ENCODE measurements at regions of chr9 and their contacts with region 1.

Region 1: DNA sequence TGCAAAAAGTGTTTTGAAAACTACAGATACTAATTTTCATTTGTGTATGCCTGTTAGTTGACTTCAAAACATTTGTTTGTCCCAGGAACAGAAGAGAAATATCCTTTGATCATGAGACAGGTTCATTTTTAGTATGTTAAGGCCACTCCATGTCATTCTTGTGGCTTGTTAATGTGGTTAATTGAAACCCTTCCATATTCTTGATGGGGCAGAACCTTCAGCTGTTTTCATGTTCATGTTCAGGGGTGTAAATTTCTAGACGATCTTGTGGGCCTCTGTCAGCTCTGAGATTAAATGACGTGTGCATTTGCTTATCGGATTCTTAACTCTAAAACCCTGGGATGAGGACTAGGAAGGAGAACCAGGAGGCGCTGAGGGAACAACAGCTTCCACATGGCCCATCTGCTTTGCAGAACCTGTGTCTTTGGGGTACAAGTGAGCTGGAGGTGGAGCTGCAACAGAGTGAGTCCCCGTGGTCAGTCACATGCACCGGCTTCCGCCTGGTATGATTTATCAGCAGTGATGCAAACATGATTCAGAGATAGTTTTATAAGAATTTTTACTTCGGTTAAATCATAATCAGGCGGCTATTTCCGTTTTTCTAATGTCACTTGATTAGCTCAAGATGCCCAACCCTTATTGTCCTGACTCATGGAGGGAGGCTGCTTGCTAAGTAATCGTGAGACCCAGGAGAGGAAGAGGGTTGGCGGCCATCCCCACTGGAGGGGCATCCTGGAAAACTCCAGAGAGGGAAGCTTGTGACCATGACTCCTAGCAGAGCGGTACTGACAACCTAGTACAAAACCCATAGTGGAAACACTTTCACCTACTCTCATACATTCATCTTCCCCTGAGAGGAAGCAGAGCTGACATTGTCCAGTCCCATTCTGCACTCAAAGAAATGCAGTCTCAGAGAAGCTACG is 138.4 kb downstream of the C9orf152 start:
- DNase-seq: peak in 4 of 5 donors; percentile 41 to 70 (median 56)
- ATAC-seq: peak; percentile 28 to 87 (median 75)
- H3K4me3 ChIP-seq: peak overlapping the region in 1 of 12 donors; percentile 4
- H3K27ac ChIP-seq: peak overlapping the region in 11 of 12 donors; percentile 35 to 73 (median 54)
- H3K4me1 ChIP-seq: peaks cover 13 to 95% (median 80%) of the 10 kb centered on the region in 12 donors
- H3K27me3 ChIP-seq: no peaks in the 10 kb centered on the region
- CTCF ChIP-seq: no peak
- POLR2A ChIP-seq: no peak

Region 2: GRCh38 chr9:109903515-109904138 is 166.0 kb before region 1 on chr9:
- intact Hi-C with region 1: loop called in 1 of 10 experiments (anchors 5 kb)
- DNase-seq: peak in 4 of 5 donors; percentile 47 to 64 (median 60)
- ATAC-seq: peak; percentile 24 to 66 (median 42)
- H3K4me3 ChIP-seq: no peak overlapping the region
- H3K27ac ChIP-seq: peak overlapping the region in 1 of 12 donors; percentile 3
- H3K4me1 ChIP-seq: peaks cover 9 to 68% (median 29%) of the 10 kb centered on the region in 12 donors
- H3K27me3 ChIP-seq: no peaks in the 10 kb centered on the region
- CTCF ChIP-seq: peak; percentile 63 to 90 (median 82)
- POLR2A ChIP-seq: no peak

Region 3: DNA sequence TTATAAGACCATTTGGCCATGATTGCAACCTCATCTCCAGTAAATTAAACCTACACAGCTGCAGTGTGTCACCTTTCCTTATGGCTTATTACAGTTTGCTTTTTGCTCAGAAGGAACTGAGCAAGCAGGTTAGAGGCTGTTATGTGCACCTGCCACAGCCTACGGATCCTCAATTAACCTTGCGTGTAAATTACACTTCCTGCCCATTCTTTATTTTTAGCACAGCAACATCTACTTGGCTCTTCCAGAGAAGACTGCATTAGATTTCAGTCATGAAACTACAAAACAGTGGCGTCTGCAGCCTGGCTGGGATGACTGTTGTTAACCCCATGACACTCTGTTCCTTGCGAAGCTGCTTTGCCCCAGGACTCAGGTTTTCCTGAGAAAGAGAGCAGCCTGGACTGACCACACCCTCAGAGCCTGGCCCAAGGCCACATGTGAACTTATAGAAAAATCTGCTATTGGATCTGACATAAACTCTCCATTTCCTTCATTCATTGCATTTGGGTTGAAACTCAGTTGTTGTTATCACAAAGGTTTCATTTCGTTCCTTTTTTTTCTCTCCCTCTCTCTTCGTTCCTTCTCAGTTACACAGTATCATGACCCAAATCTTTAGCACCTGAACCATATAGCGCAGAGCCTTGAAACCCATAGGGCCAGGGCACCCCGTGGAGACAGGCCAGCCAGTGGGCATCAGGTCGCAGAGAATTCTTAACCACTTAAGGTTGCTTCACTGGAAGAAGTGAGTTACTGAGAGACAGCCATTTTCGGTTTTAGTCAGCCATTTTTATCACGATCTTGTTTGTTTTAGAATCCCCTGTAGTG is 151.0 kb before region 1 on chr9:
- intact Hi-C with region 1: no loop called
- DNase-seq: no peak
- ATAC-seq: peak in 3 of 4 donors; percentile 43 to 53 (median 52)
- H3K4me3 ChIP-seq: peak overlapping the region in 1 of 12 donors; percentile 12
- H3K27ac ChIP-seq: peak overlapping the region in 9 of 12 donors; percentile 0 to 56 (median 22)
- H3K4me1 ChIP-seq: peaks cover 0 to 61% (median 35%) of the 10 kb centered on the region in 12 donors
- H3K27me3 ChIP-seq: no peaks in the 10 kb centered on the region
- CTCF ChIP-seq: no peak
- POLR2A ChIP-seq: no peak

Region 4: DNA sequence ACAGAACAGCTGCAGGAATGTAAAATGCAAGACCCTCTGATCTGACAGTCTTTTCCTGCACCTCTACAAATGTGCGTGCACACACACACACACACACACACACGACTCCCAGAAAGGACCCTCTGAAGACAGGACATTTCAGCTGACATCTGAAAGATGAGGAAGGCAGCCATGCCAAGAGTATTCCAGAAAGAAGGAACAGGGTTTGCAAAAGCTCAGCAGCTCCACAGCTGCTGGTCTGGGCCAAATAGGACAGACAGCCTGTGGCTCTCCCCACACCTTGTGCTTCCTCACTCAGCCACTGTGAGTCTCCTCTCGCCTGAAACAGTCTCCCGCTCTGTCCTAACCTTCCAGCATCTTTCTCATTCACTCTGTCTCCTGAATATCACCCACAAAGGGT is 100.6 kb before region 1 on chr9:
- intact Hi-C with region 1: loop called in 1 of 10 experiments (anchors 5 kb)
- DNase-seq: peak in 3 of 5 donors; percentile 37 to 44 (median 43)
- ATAC-seq: peak; percentile 32 to 79 (median 60)
- H3K4me3 ChIP-seq: no peak overlapping the region
- H3K27ac ChIP-seq: peak overlapping the region in 11 of 12 donors; percentile 13 to 88 (median 66)
- H3K4me1 ChIP-seq: peaks cover 0 to 67% (median 39%) of the 10 kb centered on the region in 12 donors
- H3K27me3 ChIP-seq: no peaks in the 10 kb centered on the region
- CTCF ChIP-seq: peak in 8 of 12 donors; percentile 8 to 52 (median 26)
- POLR2A ChIP-seq: no peak

Region 5: GRCh38 chr9:110015759-110016158 is 53.8 kb before region 1 on chr9:
- intact Hi-C with region 1: no loop called
- DNase-seq: no peak
- ATAC-seq: peak in 3 of 4 donors; percentile 60 to 81 (median 70)
- H3K4me3 ChIP-seq: no peak overlapping the region
- H3K27ac ChIP-seq: peak overlapping the region in 7 of 12 donors; percentile 7 to 61 (median 44)
- H3K4me1 ChIP-seq: peaks cover 0 to 15% (median 4%) of the 10 kb centered on the region in 12 donors
- H3K27me3 ChIP-seq: no peaks in the 10 kb centered on the region
- CTCF ChIP-seq: no peak
- POLR2A ChIP-seq: no peak

Region 6: DNA sequence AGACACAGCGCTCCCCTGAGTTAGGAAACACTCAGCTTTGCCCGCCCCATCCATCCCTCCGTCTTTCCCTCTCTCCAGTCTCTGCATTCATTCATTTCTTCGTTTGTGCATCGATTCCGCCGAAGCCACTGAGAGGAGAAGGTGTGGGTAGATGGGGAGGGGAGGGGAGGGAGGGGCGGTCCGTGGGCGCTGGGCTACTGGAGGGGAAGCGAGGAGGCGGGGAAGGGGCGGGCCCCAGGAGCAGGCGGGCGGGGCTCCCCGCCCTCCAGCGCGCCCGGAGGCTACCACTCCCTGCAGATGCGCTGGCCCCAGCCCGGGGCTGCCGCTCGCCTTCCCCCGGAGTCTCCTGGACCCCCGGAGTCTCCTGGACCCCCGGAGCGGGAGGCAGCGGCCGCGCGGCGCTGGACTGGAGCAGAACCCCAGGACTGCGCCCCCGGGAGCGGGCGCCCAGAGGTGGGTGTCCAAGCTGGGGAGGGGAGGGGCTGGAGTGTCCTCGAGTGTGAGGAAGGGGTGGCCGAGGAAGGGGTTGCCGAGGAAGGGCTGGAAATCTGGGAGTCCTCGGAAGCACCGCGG is 21.1 kb before region 1 on chr9:
- intact Hi-C with region 1: no loop called
- DNase-seq: peak; percentile 85 to 90 (median 90)
- ATAC-seq: peak; percentile 88 to 96 (median 95)
- H3K4me3 ChIP-seq: peak overlapping the region; percentile 72 to 91 (median 86)
- H3K27ac ChIP-seq: peak overlapping the region; percentile 35 to 91 (median 83)
- H3K4me1 ChIP-seq: peaks cover 3 to 54% (median 30%) of the 10 kb centered on the region in 12 donors
- H3K27me3 ChIP-seq: no peaks in the 10 kb centered on the region
- CTCF ChIP-seq: no peak
- POLR2A ChIP-seq: peak; percentile 68 to 90

Region 7: GRCh38 chr9:110110154-110110553 is 40.6 kb after region 1 on chr9:
- intact Hi-C with region 1: loop called in 1 of 10 experiments (anchors 5 kb)
- DNase-seq: no peak
- ATAC-seq: no peak
- H3K4me3 ChIP-seq: no peak overlapping the region
- H3K27ac ChIP-seq: no peak overlapping the region
- H3K4me1 ChIP-seq: peaks cover 0 to 67% (median 49%) of the 10 kb centered on the region in 12 donors
- H3K27me3 ChIP-seq: no peaks in the 10 kb centered on the region
- CTCF ChIP-seq: no peak
- POLR2A ChIP-seq: no peak

Region 8: DNA sequence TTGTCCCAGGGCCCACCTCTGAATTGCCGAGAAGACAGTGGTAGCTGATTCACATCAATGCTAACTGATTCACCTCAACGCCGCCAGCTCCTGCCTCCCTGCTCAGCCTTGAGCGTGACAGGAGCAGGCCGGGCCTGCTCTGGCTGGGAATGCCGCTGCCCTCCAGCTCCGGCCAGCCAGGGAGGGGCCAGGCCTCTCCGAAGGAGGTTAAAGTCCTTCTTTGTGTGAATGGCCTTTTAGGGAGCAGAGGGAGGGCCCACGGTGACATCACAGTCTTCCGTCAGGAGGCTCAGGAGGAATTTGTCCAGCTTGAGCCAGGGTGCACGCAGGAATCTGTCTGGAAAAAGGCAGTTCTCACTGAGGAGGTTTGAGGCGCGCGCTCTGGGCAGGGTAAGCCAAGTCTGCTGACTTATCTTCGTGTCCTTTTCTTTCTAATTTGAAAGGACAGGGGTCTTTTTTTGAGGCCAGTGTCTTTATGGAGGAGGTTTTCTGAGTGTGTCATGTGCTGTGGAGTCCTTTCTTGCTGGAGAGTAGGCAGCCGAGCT is 55.7 kb after region 1 on chr9:
- intact Hi-C with region 1: loop called in 3 of 10 experiments (anchors 5 kb)
- DNase-seq: peak; percentile 88 to 94 (median 90)
- ATAC-seq: peak; percentile 85 to 90 (median 88)
- H3K4me3 ChIP-seq: peak overlapping the region in 11 of 12 donors; percentile 21 to 56 (median 46)
- H3K27ac ChIP-seq: peak overlapping the region; percentile 74 to 93 (median 90)
- H3K4me1 ChIP-seq: peaks cover 14 to 90% (median 74%) of the 10 kb centered on the region in 12 donors
- H3K27me3 ChIP-seq: no peaks in the 10 kb centered on the region
- CTCF ChIP-seq: no peak
- POLR2A ChIP-seq: peak in 1 of 2 donors; percentile 86

Region 9: GRCh38 chr9:110143950-110144545 is 74.5 kb after region 1 on chr9:
- intact Hi-C with region 1: loop called in 2 of 10 experiments (anchors 5 kb)
- DNase-seq: no peak
- ATAC-seq: peak; percentile 29 to 59 (median 40)
- H3K4me3 ChIP-seq: no peak overlapping the region
- H3K27ac ChIP-seq: peak overlapping the region in 8 of 12 donors; percentile 1 to 51 (median 28)
- H3K4me1 ChIP-seq: peaks cover 20 to 97% (median 87%) of the 10 kb centered on the region in 12 donors
- H3K27me3 ChIP-seq: no peaks in the 10 kb centered on the region
- CTCF ChIP-seq: peak in 1 of 12 donors; percentile 5
- POLR2A ChIP-seq: no peak

Region 10: GRCh38 chr9:110152704-110153374 is 83.3 kb after region 1 on chr9:
- intact Hi-C with region 1: loop called in 2 of 10 experiments (anchors 5 kb)
- DNase-seq: no peak
- ATAC-seq: peak in 3 of 4 donors; percentile 4 to 29 (median 22)
- H3K4me3 ChIP-seq: no peak overlapping the region
- H3K27ac ChIP-seq: peak overlapping the region in 4 of 12 donors; percentile 12 to 58 (median 37)
- H3K4me1 ChIP-seq: peaks cover 29 to 100% (median 88%) of the 10 kb centered on the region in 12 donors
- H3K27me3 ChIP-seq: no peaks in the 10 kb centered on the region
- CTCF ChIP-seq: peak; percentile 54 to 79 (median 72)
- POLR2A ChIP-seq: no peak

Region 11: GRCh38 chr9:110371411-110372007 is 301.9 kb after region 1 on chr9:
- intact Hi-C with region 1: no loop called
- DNase-seq: no peak
- ATAC-seq: no peak
- H3K4me3 ChIP-seq: no peak overlapping the region
- H3K27ac ChIP-seq: no peak overlapping the region
- H3K4me1 ChIP-seq: no peaks in the 10 kb centered on the region
- H3K27me3 ChIP-seq: peaks cover 0 to 21% (median 0%) of the 10 kb centered on the region in 9 donors
- CTCF ChIP-seq: no peak
- POLR2A ChIP-seq: no peak

Measured in heart left ventricle (tissue), 16 donors.